B cell (primary cell): ENCODE measurements at regions of chr16 and their contacts with region 1.

Region 1: DNA sequence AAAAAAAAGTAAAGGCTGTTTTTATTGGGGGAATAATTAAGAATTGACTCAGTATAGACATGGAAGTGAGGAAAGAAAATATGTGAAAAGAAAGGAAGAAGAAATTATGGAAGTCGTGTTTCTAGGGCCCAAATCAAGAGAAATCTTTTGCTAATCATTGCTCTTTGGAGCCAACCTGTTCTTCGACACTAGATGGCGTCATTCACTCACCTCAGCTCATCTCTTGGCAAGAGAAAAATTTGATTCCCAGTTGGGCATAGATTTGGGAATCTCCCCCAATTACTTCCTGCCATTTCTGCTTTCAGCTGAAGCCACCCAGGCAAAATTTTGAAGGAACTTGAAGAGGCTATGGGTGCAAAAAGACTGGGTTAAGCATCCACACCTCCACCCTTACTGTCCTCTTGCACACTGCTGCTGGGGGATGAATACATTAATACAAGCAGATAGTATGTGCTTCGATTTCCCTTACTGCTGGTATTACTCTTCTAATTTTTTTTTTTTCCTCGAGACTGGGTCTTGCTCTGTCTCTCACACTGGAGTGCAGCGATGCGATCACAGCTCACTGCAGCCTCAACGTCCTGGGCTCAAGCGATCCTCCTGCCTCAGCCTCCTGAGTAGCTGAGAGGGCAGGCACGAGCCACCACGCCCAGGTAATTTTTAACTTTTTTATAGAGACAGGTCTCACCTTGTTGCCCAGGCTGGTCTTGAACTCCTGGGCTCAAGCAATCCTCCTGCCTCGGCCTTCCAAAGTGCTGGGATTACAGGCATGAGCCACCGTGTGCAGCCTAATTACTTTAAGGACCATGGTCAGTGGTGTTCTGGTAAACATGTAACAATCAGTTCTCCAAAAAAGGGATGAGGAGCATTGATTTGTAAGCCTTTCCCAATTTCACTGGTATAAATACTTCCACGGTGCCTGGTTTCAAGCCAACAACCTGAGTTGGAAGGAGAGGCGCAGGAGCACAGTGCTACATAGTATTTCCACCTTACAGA is 13.5 kb downstream of the PSMD7 start:
- DNase-seq: peak; percentile 56
- ATAC-seq: no peak
- H3K4me3 ChIP-seq: no peak overlapping the region
- H3K4me3 Mint-ChIP-seq: no peak overlapping the region
- H3K27ac ChIP-seq: no peak overlapping the region
- H3K27ac Mint-ChIP-seq: no peak overlapping the region
- H3K4me1 ChIP-seq: no peaks in the 10 kb centered on the region
- H3K4me1 Mint-ChIP-seq: no peaks in the 10 kb centered on the region
- H3K27me3 ChIP-seq: no peaks in the 10 kb centered on the region
- H3K27me3 Mint-ChIP-seq: no peaks in the 10 kb centered on the region
- CTCF ChIP-seq: peak; percentile 82

Region 2: DNA sequence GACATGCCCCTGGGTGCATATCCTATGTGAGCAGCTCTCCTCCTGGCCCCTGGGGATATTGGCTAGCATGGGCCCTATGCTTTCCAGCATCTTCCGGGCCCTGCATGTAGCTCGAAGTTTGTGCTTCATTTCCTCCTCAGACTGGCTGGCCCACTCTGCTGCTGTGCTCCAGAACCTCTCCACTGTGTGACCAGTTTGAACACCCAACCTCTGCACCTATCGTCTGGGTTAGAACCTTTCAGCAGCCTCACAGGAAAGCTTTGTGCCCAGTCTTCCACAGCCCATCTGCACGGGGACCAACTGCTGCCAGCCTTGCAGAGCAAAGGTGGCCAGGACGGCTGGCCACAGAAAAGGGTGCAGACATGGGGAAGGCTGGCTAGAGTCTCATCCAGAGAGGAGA is 121.4 kb after region 1 on chr16:
- CTCF ChIA-PET with region 1: interaction called, 16 read pairs
- POLR2A ChIA-PET with region 1: no interaction called
- intact Hi-C with region 1: no loop called
- DNase-seq: no peak
- ATAC-seq: no peak
- H3K4me3 ChIP-seq: no peak overlapping the region
- H3K4me3 Mint-ChIP-seq: no peak overlapping the region
- H3K27ac ChIP-seq: no peak overlapping the region
- H3K27ac Mint-ChIP-seq: no peak overlapping the region
- H3K4me1 ChIP-seq: no peaks in the 10 kb centered on the region
- H3K4me1 Mint-ChIP-seq: no peaks in the 10 kb centered on the region
- H3K27me3 ChIP-seq: no peaks in the 10 kb centered on the region
- H3K27me3 Mint-ChIP-seq: no peaks in the 10 kb centered on the region
- CTCF ChIP-seq: no peak